Dendritic cell treated with granulocyte-macrophage colony-stimulating factor and Interleukin-4, amounts not matched to agents 40 ng/mL and 50 ng/mL, for 4 days (primary cell): ENCODE measurements at regions of chr20 and their contacts with region 1.

Region 1: GRCh38 chr20:31617432-31618104 is 12.5 kb downstream of the ID1 start:
- H3K4me3 Mint-ChIP-seq: no peak overlapping the region
- H3K27ac Mint-ChIP-seq: peak overlapping the region; percentile 26
- H3K4me1 Mint-ChIP-seq: peaks cover 13% of the 10 kb centered on the region
- H3K27me3 Mint-ChIP-seq: no peaks in the 10 kb centered on the region

Region 2: DNA sequence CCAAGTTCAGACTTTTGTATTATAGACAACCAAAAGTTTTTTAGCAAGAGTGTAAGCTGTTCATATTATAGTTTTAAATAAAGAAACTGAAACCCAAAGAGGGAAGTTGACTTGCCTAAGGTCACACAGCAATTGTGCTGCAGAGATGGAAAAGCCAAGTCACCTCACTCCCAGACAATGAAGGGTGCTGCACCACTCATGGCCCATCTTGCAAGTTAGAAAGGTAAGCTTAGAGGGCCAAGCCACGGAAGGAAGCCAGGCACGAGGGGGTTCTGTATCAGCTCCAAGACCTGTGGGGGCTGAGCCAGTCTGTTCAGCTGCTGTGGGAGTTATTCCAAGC is 143.5 kb before region 1 on chr20:
- intact Hi-C with region 1: loop called (anchors 10 kb)
- H3K4me3 Mint-ChIP-seq: no peak overlapping the region
- H3K27ac Mint-ChIP-seq: peak overlapping the region; percentile 45
- H3K4me1 Mint-ChIP-seq: peaks cover 28% of the 10 kb centered on the region
- H3K27me3 Mint-ChIP-seq: peaks cover 41% of the 10 kb centered on the region